ENCODE measurements at regions of chrX and their contacts with region 1.

Region 1: DNA sequence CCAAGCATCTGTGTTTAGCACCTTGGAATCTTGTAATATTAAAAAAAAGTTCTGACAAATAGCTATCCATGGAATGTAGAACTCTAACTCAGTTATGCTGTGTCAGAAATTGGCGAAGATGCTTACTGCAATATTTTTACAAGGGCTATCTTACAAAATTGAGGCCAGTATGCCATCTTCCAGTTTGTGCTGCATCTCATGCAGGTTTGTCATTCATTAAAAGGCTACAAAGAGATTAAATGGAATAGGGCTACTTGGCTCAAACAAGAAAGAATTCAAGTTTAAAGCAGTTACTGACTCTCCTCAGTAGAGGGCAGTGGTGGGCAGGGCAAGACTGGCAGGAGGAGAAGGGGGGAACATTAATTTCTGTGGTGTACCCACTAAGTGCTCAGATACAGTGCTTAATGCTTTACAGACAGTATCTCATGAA is 66.5 kb downstream of the SHROOM4 start:
- DNase-seq: peak; percentile 43
- H3K4me3 Mint-ChIP-seq: no peak overlapping the region
- H3K27ac Mint-ChIP-seq: no peak overlapping the region
- H3K4me1 Mint-ChIP-seq: no peaks in the 10 kb centered on the region
- H3K27me3 Mint-ChIP-seq: no peaks in the 10 kb centered on the region
- CTCF ChIP-seq: peak; percentile 70

Region 2: DNA sequence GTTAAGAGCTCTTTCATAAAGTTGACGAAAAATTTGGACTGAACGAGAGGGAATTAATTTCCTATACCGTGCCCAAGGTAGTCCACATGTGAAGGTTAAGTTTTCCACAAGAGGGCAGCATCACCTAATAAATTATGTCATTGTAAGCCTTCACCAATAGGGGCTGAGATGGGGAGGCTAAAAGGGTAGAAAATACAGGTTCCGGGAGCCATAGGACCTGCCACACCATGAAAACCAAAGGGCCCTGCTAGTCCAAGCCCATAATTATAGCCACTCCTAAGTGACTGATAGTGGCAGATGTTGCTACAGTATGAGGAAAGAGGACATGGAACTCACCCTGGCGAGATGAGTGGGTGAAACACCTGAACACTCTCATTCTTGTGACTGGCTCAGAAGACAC is 55.7 kb before region 1 on chrX:
- CTCF ChIA-PET with region 1: no interaction called
- intact Hi-C with region 1: loop called (anchors 1 kb)
- DNase-seq: peak; percentile 39
- H3K4me3 Mint-ChIP-seq: no peak overlapping the region
- H3K27ac Mint-ChIP-seq: no peak overlapping the region
- H3K4me1 Mint-ChIP-seq: peaks cover under 1% of the 10 kb centered on the region
- H3K27me3 Mint-ChIP-seq: no peaks in the 10 kb centered on the region
- CTCF ChIP-seq: peak; percentile 73

Region 3: GRCh38 chrX:50812995-50813826 is 65.7 kb after region 1 on chrX:
- CTCF ChIA-PET with region 1: interaction called, 3 read pairs
- intact Hi-C with region 1: loop called (anchors 5 kb)
- DNase-seq: peak; percentile 38
- H3K4me3 Mint-ChIP-seq: peak overlapping the region; percentile 76
- H3K27ac Mint-ChIP-seq: no peak overlapping the region
- H3K4me1 Mint-ChIP-seq: peaks cover 25% of the 10 kb centered on the region
- H3K27me3 Mint-ChIP-seq: no peaks in the 10 kb centered on the region
- CTCF ChIP-seq: no peak

Region 4: DNA sequence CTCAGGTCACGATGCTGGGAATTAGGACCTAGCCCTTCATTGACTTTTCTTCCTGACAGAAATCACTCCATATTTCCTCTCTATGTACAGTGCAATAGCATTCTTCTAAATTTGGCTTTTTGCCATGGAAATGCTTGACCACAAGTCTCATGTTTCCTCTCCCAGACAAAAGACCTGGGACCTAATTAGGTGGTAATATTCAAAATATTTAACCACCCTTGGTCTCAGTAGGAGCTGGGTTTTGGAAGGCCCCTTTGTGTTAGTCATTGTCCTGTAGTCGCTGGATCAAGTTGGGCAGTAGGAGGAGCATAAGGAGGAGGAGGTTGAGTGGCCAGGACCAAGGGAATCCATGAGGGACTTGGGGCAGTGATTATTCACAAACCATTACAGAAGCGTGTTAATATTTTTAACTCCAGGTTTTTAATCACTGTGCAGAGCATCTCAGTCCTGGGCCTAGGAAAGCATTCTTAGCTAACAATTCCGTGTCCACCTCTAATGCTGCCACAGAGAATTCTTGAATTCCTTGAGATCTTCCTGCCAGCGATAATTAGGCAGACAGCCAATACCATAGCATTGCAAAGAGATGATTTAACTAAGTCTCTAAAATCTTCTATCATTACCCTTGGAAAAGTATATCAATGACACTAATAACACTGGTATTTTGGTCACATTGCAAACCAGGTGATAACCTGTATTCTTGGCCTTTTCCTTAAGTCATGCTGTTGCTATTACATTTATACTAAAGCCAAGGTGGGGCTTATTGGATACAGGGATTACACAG is 91.5 kb after region 1 on chrX:
- CTCF ChIA-PET with region 1: no interaction called
- intact Hi-C with region 1: loop called (anchors 5 kb)
- DNase-seq: peak; percentile 52
- H3K4me3 Mint-ChIP-seq: peak overlapping the region; percentile 2
- H3K27ac Mint-ChIP-seq: peak overlapping the region; percentile 27
- H3K4me1 Mint-ChIP-seq: peaks cover 54% of the 10 kb centered on the region
- H3K27me3 Mint-ChIP-seq: no peaks in the 10 kb centered on the region
- CTCF ChIP-seq: no peak

Region 5: GRCh38 chrX:50905334-50905733 is 157.8 kb after region 1 on chrX:
- CTCF ChIA-PET with region 1: interaction called, 6 read pairs
- intact Hi-C with region 1: loop called (anchors 1 kb)
- DNase-seq: peak; percentile 46
- H3K4me3 Mint-ChIP-seq: no peak overlapping the region
- H3K27ac Mint-ChIP-seq: no peak overlapping the region
- H3K4me1 Mint-ChIP-seq: no peaks in the 10 kb centered on the region
- H3K27me3 Mint-ChIP-seq: no peaks in the 10 kb centered on the region
- CTCF ChIP-seq: peak; percentile 77

Region 6: DNA sequence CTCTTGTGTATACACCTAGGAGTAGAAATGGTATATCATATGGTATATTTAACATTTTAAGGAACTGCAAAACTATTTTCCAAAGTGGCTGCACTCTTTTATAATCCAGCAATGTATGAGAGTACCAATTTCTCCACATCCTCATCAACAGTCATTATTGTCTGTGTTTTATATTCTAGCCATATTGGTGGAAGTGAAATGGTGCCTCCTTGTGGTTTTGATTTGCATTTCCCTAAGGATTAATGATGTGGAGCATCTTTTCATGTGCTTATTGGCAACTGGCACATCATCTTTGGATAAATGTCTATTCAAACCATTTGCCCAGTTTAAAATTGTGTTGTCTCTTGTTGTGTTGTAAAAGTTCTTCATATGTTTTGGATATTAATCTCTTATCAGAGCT is 172.6 kb after region 1 on chrX:
- CTCF ChIA-PET with region 1: no interaction called
- intact Hi-C with region 1: loop called (anchors 5 kb)
- DNase-seq: peak; percentile 10
- H3K4me3 Mint-ChIP-seq: no peak overlapping the region
- H3K27ac Mint-ChIP-seq: no peak overlapping the region
- H3K4me1 Mint-ChIP-seq: no peaks in the 10 kb centered on the region
- H3K27me3 Mint-ChIP-seq: peaks cover 12% of the 10 kb centered on the region
- CTCF ChIP-seq: no peak

Region 7: DNA sequence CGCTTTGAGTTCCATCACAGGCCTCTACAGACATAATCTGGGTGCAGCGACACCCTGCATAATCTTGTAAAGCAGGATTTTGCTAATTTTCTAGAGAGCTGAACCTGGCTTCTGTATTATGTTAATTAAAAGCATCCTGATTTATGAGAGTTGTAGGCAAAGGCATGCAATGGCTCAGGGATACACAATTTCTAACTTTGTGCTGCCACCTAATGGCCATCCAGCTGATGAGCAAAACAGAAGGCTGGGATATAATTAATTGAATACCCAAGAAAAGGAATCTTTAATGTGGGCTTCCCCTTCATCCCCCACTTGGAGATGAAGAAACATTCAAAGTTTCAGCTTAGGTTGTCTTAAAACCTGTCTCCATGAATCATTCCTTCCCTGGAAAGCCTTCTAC is 241.2 kb after region 1 on chrX:
- CTCF ChIA-PET with region 1: no interaction called
- intact Hi-C with region 1: loop called (anchors 2 kb)
- DNase-seq: peak; percentile 29
- H3K4me3 Mint-ChIP-seq: no peak overlapping the region
- H3K27ac Mint-ChIP-seq: no peak overlapping the region
- H3K4me1 Mint-ChIP-seq: no peaks in the 10 kb centered on the region
- H3K27me3 Mint-ChIP-seq: peaks cover 26% of the 10 kb centered on the region
- CTCF ChIP-seq: no peak

Region 8: GRCh38 chrX:51047836-51048349 is 300.4 kb after region 1 on chrX:
- CTCF ChIA-PET with region 1: no interaction called
- intact Hi-C with region 1: no loop called
- DNase-seq: no peak
- H3K4me3 Mint-ChIP-seq: no peak overlapping the region
- H3K27ac Mint-ChIP-seq: no peak overlapping the region
- H3K4me1 Mint-ChIP-seq: no peaks in the 10 kb centered on the region
- H3K27me3 Mint-ChIP-seq: peaks cover 61% of the 10 kb centered on the region
- CTCF ChIP-seq: no peak